GM10248 (cell line): ENCODE measurements at regions of chr4 and their contacts with region 1.

Region 1: DNA sequence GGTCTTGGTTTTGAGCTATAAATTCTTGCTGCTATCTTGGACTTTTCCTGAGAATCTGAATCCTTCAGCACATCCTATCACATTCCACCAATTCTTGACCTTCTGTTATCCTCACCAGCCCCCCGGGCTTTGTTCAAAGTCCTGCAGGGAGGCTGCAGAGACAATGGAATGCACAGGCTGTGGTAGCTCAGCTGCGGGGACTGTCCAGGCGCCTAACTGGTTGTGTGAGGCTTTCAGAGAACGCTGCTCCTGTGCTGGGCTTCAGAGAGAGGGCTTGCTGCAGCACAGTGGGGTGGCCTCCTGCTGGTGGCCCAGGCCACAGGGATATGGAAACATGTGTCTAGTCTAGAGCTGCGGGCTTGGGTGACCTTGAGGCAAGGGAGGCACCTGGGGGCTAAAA is 196.3 kb upstream of the GATB start:
- DNase-seq: no peak
- CTCF ChIP-seq: no peak

Region 2: GRCh38 chr4:151968643-151969042 is 11.5 kb after region 1 on chr4:
- CTCF ChIA-PET with region 1: interaction called, 19 read pairs
- POLR2A ChIA-PET with region 1: no interaction called
- DNase-seq: no peak
- CTCF ChIP-seq: no peak

Region 3: GRCh38 chr4:152045807-152046571 is 88.8 kb after region 1 on chr4:
- CTCF ChIA-PET with region 1: no interaction called
- POLR2A ChIA-PET with region 1: no interaction called
- DNase-seq: peak; percentile 72
- CTCF ChIP-seq: peak; percentile 56